Ascending aorta (tissue), 2 donors: ENCODE measurements at regions of chr16 and their contacts with region 1.

Region 1: GRCh38 chr16:89490387-89491237 is at the start of gene ANKRD11:
- DNase-seq: peak; percentile 98 to 100
- H3K4me3 ChIP-seq: peak within 1 kb of the TSS; percentile 95
- H3K27ac ChIP-seq: peak within 1 kb of the TSS; percentile 99
- H3K4me1 ChIP-seq: peaks cover 9 to 36% of the 10 kb centered on the region in 2 donors
- H3K27me3 ChIP-seq: no peaks in the 10 kb centered on the region
- CTCF ChIP-seq: peak in 1 of 3 experiments; percentile 8
- total RNA-seq, gene ANKRD11: 124 TPM

Region 2: GRCh38 chr16:88856828-88857733 is 633.5 kb before region 1 on chr16 and contains the starts of genes GALNS and TRAPPC2L:
- intact Hi-C with region 1: loop called (anchors 2 kb)
- DNase-seq: peak; percentile 92 to 99
- H3K4me3 ChIP-seq: peak within 1 kb of the TSS; percentile 64 to 87
- H3K27ac ChIP-seq: peak within 1 kb of the TSS; percentile 54 to 66
- H3K4me1 ChIP-seq: peaks cover 13 to 14% of the 10 kb centered on the region in 2 donors
- H3K27me3 ChIP-seq: no peaks in the 10 kb centered on the region
- CTCF ChIP-seq: no peak
- total RNA-seq, gene GALNS: 62.2 TPM
- total RNA-seq, gene TRAPPC2L: 7.6 TPM

Region 3: GRCh38 chr16:88999457-89000206 is 491.0 kb before region 1 on chr16:
- intact Hi-C with region 1: no loop called
- DNase-seq: no peak
- H3K4me3 ChIP-seq: no peak overlapping the region
- H3K27ac ChIP-seq: no peak overlapping the region
- H3K4me1 ChIP-seq: no peaks in the 10 kb centered on the region
- H3K27me3 ChIP-seq: no peaks in the 10 kb centered on the region
- CTCF ChIP-seq: no peak

Region 4: DNA sequence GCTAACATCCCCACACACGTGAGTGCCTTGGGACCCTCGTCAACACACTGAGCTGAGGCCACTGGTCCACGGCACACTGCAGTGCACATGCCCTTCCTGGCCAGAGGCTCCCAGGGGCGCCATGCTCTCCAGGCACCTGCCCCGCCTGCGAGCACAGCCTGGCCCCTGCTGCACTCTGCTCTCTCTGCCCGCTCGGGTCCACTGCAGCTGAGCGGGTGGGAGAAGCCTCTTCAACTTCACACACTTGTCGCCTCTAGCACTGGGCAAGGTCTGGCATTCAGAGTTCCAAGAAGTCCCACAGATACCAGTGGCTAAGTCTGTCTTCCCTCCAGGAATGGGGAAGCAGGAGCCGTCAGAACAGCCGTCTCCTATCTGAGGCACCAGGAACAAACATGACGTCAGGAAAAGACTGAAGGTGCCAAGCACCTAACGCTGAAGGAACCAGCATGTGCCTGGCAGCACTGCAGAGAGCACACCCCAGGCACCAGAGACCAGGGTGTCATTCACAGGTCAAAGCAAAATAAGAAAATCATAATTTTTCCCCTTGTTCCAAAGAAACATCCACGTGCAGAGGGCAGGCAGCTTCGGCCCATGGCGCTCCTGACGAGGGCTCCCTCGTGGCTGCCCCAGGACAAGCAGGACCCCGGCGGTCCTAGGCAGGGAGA is 190.2 kb before region 1 on chr16:
- intact Hi-C with region 1: loop called (anchors 2 kb)
- DNase-seq: peak in 1 of 2 donors; percentile 83
- H3K4me3 ChIP-seq: peak overlapping the region in 1 of 2 donors; percentile 11
- H3K27ac ChIP-seq: peak overlapping the region; percentile 83 to 91
- H3K4me1 ChIP-seq: peaks cover 17 to 24% of the 10 kb centered on the region in 2 donors
- H3K27me3 ChIP-seq: no peaks in the 10 kb centered on the region
- CTCF ChIP-seq: no peak

Region 5: DNA sequence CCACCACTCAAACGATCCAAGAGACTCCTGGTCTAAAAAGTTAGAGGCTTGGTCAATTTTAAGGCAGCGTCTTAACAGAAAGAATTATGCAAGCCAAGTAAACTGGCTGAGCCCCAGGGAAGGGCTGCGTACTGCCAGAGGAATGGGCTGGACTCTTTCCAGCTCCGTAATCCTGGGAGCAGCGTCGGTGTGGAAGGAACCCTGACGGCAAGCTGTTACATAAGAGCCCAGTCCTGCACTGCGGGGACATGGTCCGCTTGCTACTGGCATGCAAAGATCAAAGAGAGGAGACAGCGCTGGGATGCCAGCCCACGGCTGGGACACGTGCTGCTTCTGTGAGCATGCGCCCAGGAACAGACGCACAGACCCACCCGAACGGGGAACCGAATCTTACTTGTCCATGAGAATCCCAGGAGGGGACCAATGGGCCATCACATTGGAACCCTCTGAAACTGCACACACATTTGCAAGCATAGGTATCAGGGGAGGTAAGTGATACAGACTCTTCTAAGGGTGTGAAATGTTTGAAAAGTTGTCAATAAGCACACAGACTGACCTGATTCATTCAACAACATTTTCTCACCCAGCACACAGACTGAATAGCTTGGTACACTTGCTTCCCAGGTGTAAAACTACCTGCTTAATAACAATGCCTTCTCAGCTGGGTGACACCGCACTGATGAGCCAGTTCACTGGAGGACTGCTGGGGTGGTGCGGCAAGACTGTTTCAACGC is 95.3 kb before region 1 on chr16:
- intact Hi-C with region 1: loop called (anchors 2 kb)
- DNase-seq: peak; percentile 34 to 96
- H3K4me3 ChIP-seq: no peak overlapping the region
- H3K27ac ChIP-seq: peak overlapping the region; percentile 47 to 51
- H3K4me1 ChIP-seq: peaks cover 0 to 22% of the 10 kb centered on the region in 2 donors
- H3K27me3 ChIP-seq: no peaks in the 10 kb centered on the region
- CTCF ChIP-seq: no peak

Region 6: GRCh38 chr16:89442990-89443731 is 47.5 kb before region 1 on chr16:
- intact Hi-C with region 1: loop called (anchors 2 kb)
- DNase-seq: peak in 1 of 2 donors; percentile 72
- H3K4me3 ChIP-seq: peak overlapping the region in 1 of 2 donors; percentile 8
- H3K27ac ChIP-seq: peak overlapping the region; percentile 70 to 79
- H3K4me1 ChIP-seq: peaks cover 11 to 50% of the 10 kb centered on the region in 2 donors
- H3K27me3 ChIP-seq: no peaks in the 10 kb centered on the region
- CTCF ChIP-seq: peak in 1 of 3 experiments; percentile 17

Region 7: GRCh38 chr16:89560378-89561141 is 69.9 kb after region 1 on chr16 and contains the start of gene RPL13:
- intact Hi-C with region 1: loop called (anchors 1 kb)
- DNase-seq: peak; percentile 82 to 98
- H3K4me3 ChIP-seq: peak within 1 kb of the TSS; percentile 66 to 74
- H3K27ac ChIP-seq: peak within 1 kb of the TSS; percentile 95 to 96
- H3K4me1 ChIP-seq: peaks cover 17% of the 10 kb centered on the region in 2 donors
- H3K27me3 ChIP-seq: no peaks in the 10 kb centered on the region
- CTCF ChIP-seq: no peak
- total RNA-seq, gene RPL13: 8,360 TPM

Region 8: GRCh38 chr16:89623511-89624261 is 133.1 kb after region 1 on chr16:
- intact Hi-C with region 1: no loop called
- DNase-seq: no peak
- H3K4me3 ChIP-seq: no peak overlapping the region
- H3K27ac ChIP-seq: no peak overlapping the region
- H3K4me1 ChIP-seq: no peaks in the 10 kb centered on the region
- H3K27me3 ChIP-seq: no peaks in the 10 kb centered on the region
- CTCF ChIP-seq: no peak